ENCODE measurements at regions of chr11 and their contacts with region 1.

Region 1: GRCh38 chr11:58579192-58580129 is 598 bp downstream of the ZFP91 start:
- DNase-seq: peak; percentile 97
- H3K4me3 Mint-ChIP-seq: peak overlapping the region; percentile 93
- H3K27ac Mint-ChIP-seq: peak overlapping the region; percentile 100
- H3K4me1 Mint-ChIP-seq: peaks cover 66% of the 10 kb centered on the region
- H3K27me3 Mint-ChIP-seq: peaks cover 4% of the 10 kb centered on the region

Region 2: DNA sequence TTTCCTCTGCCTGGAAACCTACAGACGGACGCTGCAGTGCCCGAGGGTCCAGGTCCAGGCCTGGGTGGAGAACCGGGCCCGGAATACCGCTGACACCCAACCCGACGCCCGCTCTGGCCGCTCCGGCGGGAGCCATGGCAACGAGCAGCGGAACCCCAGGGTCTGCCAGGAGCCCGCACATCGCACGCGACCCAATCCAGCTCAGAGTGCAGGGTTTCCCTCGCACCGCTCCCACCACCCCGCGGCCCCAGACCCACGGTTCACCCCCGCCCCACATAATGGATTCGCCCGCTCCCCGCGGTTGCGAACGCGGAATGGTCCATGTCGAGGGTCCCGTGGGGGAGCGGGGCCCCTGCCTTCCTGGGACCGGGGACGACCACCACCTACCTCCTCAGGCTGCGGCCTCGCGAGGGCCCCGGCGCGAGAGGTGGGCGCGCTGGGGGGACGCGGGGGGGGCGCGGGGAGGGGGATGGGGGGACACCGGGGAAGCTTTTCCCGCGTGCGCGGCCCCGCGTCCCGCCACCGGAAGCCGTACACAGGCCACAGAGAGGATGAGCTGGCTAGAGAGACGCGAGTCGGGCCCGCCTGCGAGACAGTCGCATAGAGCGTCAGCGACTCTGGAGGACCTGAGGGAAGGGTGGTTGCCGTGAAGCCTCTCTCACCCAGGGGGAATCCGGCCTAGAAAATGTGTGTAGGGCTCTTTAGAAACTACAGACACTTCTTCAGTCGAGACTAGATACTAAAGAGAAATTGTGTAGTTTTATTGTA is 1243.9 kb before region 1 on chr11 and contains the start of gene SSRP1:
- intact Hi-C with region 1: loop called (anchors 5 kb)
- DNase-seq: peak; percentile 95
- H3K4me3 Mint-ChIP-seq: peak within 1 kb of the TSS; percentile 93
- H3K27ac Mint-ChIP-seq: peak within 1 kb of the TSS; percentile 99
- H3K4me1 Mint-ChIP-seq: peaks cover 35% of the 10 kb centered on the region
- H3K27me3 Mint-ChIP-seq: no peaks in the 10 kb centered on the region
- total RNA-seq, gene SSRP1: 253 and 256 TPM in 2 replicates

Region 3: GRCh38 chr11:57657194-57658022 is 922.1 kb before region 1 on chr11 and contains the start of gene CLP1:
- intact Hi-C with region 1: loop called (anchors 1 kb)
- DNase-seq: peak; percentile 100
- H3K4me3 Mint-ChIP-seq: peak within 1 kb of the TSS; percentile 86
- H3K27ac Mint-ChIP-seq: peak within 1 kb of the TSS; percentile 88
- H3K4me1 Mint-ChIP-seq: peaks cover 18% of the 10 kb centered on the region
- H3K27me3 Mint-ChIP-seq: no peaks in the 10 kb centered on the region
- total RNA-seq, gene CLP1: 18.5 and 19.8 TPM in 2 replicates

Region 4: DNA sequence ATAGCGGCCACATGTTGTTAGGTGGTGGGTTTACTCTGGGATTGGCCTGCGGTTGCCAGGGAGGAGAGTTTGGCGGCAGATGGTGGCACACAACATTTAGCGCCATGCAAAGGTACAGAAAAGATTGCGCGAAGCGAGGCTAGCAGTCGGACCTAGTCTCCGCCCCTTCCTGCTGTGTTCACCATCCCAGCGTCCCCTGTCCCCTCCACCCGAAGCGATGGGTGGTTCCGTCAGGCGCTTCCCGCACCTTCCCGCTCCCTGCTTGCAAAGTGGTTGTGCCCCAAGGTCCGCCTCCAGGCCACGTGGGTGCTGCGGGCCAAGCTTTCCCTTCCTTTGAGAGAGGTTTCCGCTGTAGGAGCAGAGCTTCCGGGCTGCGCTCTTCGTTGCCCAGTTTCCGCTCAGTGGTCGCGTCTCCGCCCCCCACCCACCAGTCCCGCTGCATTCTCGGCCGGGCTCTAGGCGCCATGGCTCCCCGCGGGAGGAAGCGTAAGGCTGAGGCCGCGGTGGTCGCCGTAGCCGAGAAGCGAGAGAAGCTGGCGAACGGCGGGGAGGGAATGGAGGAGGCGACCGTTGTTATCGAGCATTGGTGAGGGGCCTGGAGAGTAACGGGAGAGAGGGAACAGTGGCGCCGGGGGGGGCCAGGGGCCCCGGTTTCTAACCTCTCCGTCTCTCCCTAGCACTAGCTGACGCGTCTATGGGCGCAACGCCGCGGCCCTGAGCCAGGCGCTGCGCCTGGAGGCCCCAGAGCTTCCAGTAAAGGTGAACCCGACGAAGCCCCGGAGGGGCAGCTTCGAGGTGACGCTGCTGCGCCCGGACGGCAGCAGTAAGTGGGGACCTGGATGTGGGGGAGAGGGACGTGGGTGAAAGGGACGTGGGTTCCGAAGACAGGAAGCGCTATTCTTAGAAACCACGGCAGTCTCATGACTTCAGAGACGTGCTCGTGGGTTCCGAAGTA is 838.1 kb before region 1 on chr11 and contains the start of gene SELENOH:
- intact Hi-C with region 1: loop called (anchors 1 kb)
- DNase-seq: peak; percentile 98
- H3K4me3 Mint-ChIP-seq: peak within 1 kb of the TSS; percentile 93
- H3K27ac Mint-ChIP-seq: peak within 1 kb of the TSS; percentile 96
- H3K4me1 Mint-ChIP-seq: peaks cover 30% of the 10 kb centered on the region
- H3K27me3 Mint-ChIP-seq: no peaks in the 10 kb centered on the region
- total RNA-seq, gene SELENOH: 211 and 216 TPM in 2 replicates

Region 5: GRCh38 chr11:58597486-58598144 is 18.2 kb after region 1 on chr11:
- intact Hi-C with region 1: loop called (anchors 1 kb)
- DNase-seq: no peak
- H3K4me3 Mint-ChIP-seq: peak overlapping the region; percentile 22
- H3K27ac Mint-ChIP-seq: peak overlapping the region; percentile 59
- H3K4me1 Mint-ChIP-seq: peaks cover 51% of the 10 kb centered on the region
- H3K27me3 Mint-ChIP-seq: no peaks in the 10 kb centered on the region

Region 6: DNA sequence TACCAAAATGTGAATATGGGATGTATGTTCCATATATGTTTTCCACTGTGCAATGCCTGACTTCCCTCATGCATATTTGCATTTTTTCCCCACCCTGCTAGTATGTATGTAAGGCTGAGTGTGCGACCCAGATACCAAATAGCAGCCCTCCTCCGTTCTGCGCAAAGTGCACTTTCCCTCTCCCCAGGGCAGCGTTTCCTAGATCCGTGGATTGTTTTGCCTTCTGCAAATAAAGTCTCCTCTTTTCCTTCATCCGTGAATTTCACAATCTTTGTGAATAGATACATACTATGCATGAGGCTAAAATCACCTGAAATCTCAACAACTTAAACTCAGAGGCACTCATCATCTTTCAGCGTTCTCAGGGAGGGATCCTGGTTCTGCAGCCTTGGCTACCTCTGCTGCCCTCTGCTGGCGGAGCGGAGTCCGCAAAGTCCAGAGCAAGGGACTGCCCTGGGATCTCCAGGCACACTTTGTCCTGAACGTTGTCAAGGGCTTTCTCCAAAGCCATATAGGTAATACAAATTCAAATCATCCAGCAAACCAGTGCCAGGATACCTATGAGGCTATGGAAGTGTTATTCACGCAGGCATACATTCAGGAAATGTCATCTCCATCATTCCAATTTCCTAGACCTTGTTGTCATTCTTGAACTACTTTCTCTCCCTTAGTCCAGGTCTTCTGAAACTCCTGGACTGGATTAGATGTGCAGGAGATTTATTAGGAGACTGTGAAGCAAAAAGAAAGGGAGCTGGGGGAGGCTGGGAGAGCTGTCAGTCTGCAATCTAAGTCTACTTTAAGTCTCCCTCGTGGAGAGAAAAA is 96.1 kb after region 1 on chr11:
- intact Hi-C with region 1: loop called (anchors 2 kb)
- DNase-seq: peak; percentile 91
- H3K4me3 Mint-ChIP-seq: no peak overlapping the region
- H3K27ac Mint-ChIP-seq: no peak overlapping the region
- H3K4me1 Mint-ChIP-seq: no peaks in the 10 kb centered on the region
- H3K27me3 Mint-ChIP-seq: peaks cover 7% of the 10 kb centered on the region

Region 7: GRCh38 chr11:59142530-59143507 is 563.4 kb after region 1 on chr11 and contains the start of gene FAM111A:
- intact Hi-C with region 1: loop called (anchors 1 kb)
- DNase-seq: peak; percentile 97
- H3K4me3 Mint-ChIP-seq: peak within 1 kb of the TSS; percentile 91
- H3K27ac Mint-ChIP-seq: peak within 1 kb of the TSS; percentile 96
- H3K4me1 Mint-ChIP-seq: peaks cover 59% of the 10 kb centered on the region
- H3K27me3 Mint-ChIP-seq: no peaks in the 10 kb centered on the region
- total RNA-seq, gene FAM111A: 62.2 and 71.2 TPM in 2 replicates

Measured in activated CD4-positive, alpha-beta T cell treated with anti-CD3 and anti-CD28 coated beads, Interleukin-2, amount 10 ng/mL, durations not matched to agents 24 days and 14 days (primary cell).